ENCODE measurements at regions of chr9 and their contacts with region 1.

Region 1: DNA sequence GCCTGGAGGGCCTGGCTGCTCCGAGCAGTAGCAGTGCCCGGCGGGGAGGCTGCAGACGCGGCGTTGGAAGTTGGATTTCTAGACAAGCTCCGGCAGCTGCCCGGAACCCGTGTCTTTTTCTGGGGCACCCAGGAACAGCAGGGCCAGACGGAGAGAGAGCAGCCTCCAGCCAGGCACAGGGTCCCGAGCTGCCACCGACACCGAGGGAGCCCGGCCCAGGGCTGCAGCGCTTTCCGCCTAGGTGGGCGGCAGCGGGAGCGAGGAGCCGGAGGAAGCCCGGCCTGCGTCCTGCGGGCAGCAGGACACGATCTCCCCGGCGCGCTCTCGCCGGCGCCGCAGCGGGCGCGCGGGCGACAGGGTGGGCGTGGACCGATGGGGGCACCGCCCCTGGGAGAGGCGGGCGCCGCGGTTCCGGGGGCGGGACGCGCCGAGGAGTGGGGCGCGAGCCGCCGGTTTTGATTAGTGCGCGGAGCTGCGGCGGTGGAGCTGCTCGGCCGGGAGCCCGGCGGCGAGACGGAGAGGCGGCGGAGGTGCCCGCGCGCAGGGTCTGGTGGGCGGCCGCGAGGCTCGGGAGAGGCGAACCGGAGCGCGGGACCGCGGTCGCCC is at the start of gene UGCG:
- DNase-seq: peak; percentile 44 to 92
- H3K4me3 ChIP-seq: peak within 1 kb of the TSS; percentile 88 to 95
- H3K27ac ChIP-seq: peak within 1 kb of the TSS; percentile 95
- H3K4me1 ChIP-seq: peaks cover 3 to 28% of the 10 kb centered on the region in 2 donors
- H3K27me3 ChIP-seq: no peaks in the 10 kb centered on the region
- CTCF ChIP-seq: no peak
- total RNA-seq, gene UGCG: 5.7 TPM

Region 2: GRCh38 chr9:111375817-111376564 is 520.5 kb before region 1 on chr9:
- intact Hi-C with region 1: no loop called
- DNase-seq: no peak
- H3K4me3 ChIP-seq: no peak overlapping the region
- H3K27ac ChIP-seq: no peak overlapping the region
- H3K4me1 ChIP-seq: no peaks in the 10 kb centered on the region
- H3K27me3 ChIP-seq: no peaks in the 10 kb centered on the region
- CTCF ChIP-seq: no peak

Region 3: DNA sequence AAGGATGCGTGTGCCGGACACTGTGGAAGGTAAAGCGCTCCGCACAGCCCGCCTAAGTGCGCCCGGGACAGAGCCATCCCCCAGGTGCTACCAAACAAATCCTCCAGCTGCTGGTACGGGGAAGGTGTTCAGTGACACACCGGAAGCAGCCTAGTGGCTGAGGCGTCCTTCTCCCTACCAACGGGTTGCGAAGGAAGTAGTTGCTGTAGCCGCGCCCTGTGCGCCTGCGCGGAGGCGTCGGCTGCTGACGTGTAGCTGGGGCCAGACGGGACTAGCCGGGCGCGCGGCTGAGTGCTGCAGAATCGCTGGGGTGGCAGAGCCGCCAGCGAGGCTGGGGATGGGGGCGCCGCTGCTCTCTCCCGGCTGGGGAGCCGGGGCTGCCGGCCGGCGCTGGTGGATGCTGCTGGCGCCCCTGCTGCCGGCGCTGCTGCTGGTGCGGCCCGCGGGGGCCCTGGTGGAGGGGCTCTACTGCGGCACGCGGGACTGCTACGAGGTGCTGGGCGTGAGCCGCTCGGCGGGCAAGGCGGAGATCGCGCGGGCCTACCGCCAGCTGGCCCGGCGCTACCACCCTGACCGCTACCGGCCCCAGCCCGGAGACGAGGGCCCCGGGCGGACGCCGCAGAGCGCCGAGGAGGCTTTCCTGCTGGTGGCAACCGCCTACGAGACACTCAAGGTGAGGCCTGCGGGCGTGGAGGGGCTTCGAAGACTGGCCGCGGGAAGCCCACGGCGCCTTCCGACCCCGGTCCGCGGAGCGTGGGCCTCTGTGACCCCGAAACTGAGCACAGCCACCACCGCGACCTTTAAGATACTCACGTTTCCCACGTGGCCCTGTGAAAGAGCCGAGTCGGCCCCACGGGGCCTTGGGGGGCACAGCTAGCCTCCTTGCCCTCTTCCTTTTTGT is 265.1 kb before region 1 on chr9 and contains the start of gene DNAJC25:
- intact Hi-C with region 1: loop called (anchors 10 kb)
- DNase-seq: peak; percentile 91 to 98
- H3K4me3 ChIP-seq: peak within 1 kb of the TSS; percentile 92 to 99
- H3K27ac ChIP-seq: peak within 1 kb of the TSS; percentile 84 to 92
- H3K4me1 ChIP-seq: peaks cover 0 to 13% of the 10 kb centered on the region in 2 donors
- H3K27me3 ChIP-seq: no peaks in the 10 kb centered on the region
- CTCF ChIP-seq: no peak
- total RNA-seq, gene DNAJC25: 2.2 TPM

Region 4: GRCh38 chr9:112037281-112038016 is 141.0 kb after region 1 on chr9:
- intact Hi-C with region 1: no loop called
- DNase-seq: no peak
- H3K4me3 ChIP-seq: no peak overlapping the region
- H3K27ac ChIP-seq: no peak overlapping the region
- H3K4me1 ChIP-seq: peaks cover 3 to 5% of the 10 kb centered on the region in 2 donors
- H3K27me3 ChIP-seq: no peaks in the 10 kb centered on the region
- CTCF ChIP-seq: no peak

Region 5: GRCh38 chr9:112074250-112075008 is 178.0 kb after region 1 on chr9:
- intact Hi-C with region 1: loop called (anchors 5 kb)
- DNase-seq: peak in 1 of 2 donors; percentile 82
- H3K4me3 ChIP-seq: peak overlapping the region in 1 of 2 donors; percentile 21
- H3K27ac ChIP-seq: peak overlapping the region; percentile 54 to 65
- H3K4me1 ChIP-seq: no peaks in the 10 kb centered on the region
- H3K27me3 ChIP-seq: no peaks in the 10 kb centered on the region
- CTCF ChIP-seq: peak; percentile 89 to 94 (median 91)

Region 6: GRCh38 chr9:112333639-112334431 is 437.4 kb after region 1 on chr9:
- intact Hi-C with region 1: loop called (anchors 1 kb)
- DNase-seq: peak; percentile 65 to 97
- H3K4me3 ChIP-seq: peak overlapping the region; percentile 83 to 95
- H3K27ac ChIP-seq: peak overlapping the region; percentile 98 to 100
- H3K4me1 ChIP-seq: peaks cover 0 to 7% of the 10 kb centered on the region in 2 donors
- H3K27me3 ChIP-seq: no peaks in the 10 kb centered on the region
- CTCF ChIP-seq: peak; percentile 31 to 77 (median 63)

Region 7: GRCh38 chr9:112486221-112487007 is 590.0 kb after region 1 on chr9 and contains the start of gene KIAA1958:
- intact Hi-C with region 1: loop called (anchors 2 kb)
- DNase-seq: peak; percentile 33 to 89
- H3K4me3 ChIP-seq: peak within 1 kb of the TSS; percentile 96 to 99
- H3K27ac ChIP-seq: peak within 1 kb of the TSS; percentile 80 to 89
- H3K4me1 ChIP-seq: peaks cover 3 to 10% of the 10 kb centered on the region in 2 donors
- H3K27me3 ChIP-seq: no peaks in the 10 kb centered on the region
- CTCF ChIP-seq: no peak
- total RNA-seq, gene KIAA1958: 2.0 TPM

Measured in ascending aorta (tissue), 2 donors.